SK-N-SH (cell line): ENCODE measurements at regions of chr14 and their contacts with region 1.

Region 1: GRCh38 chr14:77616454-77617229 is at the start of gene SPTLC2:
- DNase-seq: peak; percentile 97
- H3K4me3 ChIP-seq: peak within 1 kb of the TSS; percentile 90 to 93
- H3K27ac ChIP-seq: peak within 1 kb of the TSS; percentile 69 to 91
- H3K4me1 ChIP-seq: peaks cover 0 to 20% of the 10 kb centered on the region in 2 experiments; a peak in 3 of 4 replicates
- H3K27me3 ChIP-seq: no peaks in the 10 kb centered on the region
- CTCF ChIP-seq: peak; percentile 40
- EP300 ChIP-seq: peak in 1 of 2 experiments; percentile 30; a peak in 1 of 4 replicates
- RAD21 ChIP-seq: no peak; the same call in 1 of the 2 replicates
- polyA plus RNA-seq, gene SPTLC2: 10.2 and 14.4 TPM in 2 replicates

Region 2: GRCh38 chr14:77554207-77554606 is 62.4 kb before region 1 on chr14:
- CTCF ChIA-PET with region 1: no interaction called
- POLR2A ChIA-PET with region 1: no interaction called
- DNase-seq: no peak
- H3K4me3 ChIP-seq: no peak overlapping the region
- H3K27ac ChIP-seq: no peak overlapping the region
- H3K4me1 ChIP-seq: no peaks in the 10 kb centered on the region
- H3K27me3 ChIP-seq: no peaks in the 10 kb centered on the region
- CTCF ChIP-seq: no peak
- EP300 ChIP-seq: no peak
- RAD21 ChIP-seq: no peak

Region 3: DNA sequence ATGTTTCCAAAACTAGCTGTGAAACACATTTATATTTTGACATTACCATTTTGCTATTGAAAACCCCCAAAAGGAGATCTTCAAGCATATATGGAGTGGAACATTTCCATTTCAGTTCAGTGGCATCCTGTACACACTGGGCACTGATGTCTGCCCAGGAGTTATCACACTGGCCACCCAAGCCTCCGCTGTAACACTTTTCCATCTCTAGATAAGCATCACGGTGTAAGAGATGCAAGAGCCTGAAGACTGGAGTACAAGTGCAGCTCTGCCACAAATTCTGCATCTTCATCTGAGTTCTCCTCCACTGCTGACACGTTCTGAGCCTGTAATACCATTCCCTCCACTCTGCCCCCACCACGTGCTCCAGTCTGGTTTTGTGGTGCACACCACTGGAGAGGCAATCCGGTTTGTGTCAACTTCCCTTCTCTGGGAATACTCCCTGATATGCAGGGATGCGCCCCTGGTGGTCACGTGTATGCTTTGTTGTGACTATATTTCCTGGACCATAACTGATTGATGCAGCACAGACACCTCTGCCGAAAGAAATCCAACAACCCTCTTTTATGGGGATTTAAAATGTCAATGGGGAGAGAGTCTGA is 12.9 kb before region 1 on chr14:
- CTCF ChIA-PET with region 1: interaction called, 18 read pairs
- POLR2A ChIA-PET with region 1: no interaction called
- DNase-seq: peak; percentile 78
- H3K4me3 ChIP-seq: no peak overlapping the region
- H3K27ac ChIP-seq: peak overlapping the region in 1 of 2 experiments; percentile 60; a peak in 2 of 4 replicates
- H3K4me1 ChIP-seq: peaks cover 11 to 16% of the 10 kb centered on the region in 2 experiments; a peak in 3 of 4 replicates
- H3K27me3 ChIP-seq: no peaks in the 10 kb centered on the region
- CTCF ChIP-seq: peak; percentile 66
- EP300 ChIP-seq: peak in 1 of 2 experiments; percentile 5; a peak in 1 of 4 replicates
- RAD21 ChIP-seq: peak; percentile 37